ENCODE measurements at regions of chr20 and their contacts with region 1.

Region 1: DNA sequence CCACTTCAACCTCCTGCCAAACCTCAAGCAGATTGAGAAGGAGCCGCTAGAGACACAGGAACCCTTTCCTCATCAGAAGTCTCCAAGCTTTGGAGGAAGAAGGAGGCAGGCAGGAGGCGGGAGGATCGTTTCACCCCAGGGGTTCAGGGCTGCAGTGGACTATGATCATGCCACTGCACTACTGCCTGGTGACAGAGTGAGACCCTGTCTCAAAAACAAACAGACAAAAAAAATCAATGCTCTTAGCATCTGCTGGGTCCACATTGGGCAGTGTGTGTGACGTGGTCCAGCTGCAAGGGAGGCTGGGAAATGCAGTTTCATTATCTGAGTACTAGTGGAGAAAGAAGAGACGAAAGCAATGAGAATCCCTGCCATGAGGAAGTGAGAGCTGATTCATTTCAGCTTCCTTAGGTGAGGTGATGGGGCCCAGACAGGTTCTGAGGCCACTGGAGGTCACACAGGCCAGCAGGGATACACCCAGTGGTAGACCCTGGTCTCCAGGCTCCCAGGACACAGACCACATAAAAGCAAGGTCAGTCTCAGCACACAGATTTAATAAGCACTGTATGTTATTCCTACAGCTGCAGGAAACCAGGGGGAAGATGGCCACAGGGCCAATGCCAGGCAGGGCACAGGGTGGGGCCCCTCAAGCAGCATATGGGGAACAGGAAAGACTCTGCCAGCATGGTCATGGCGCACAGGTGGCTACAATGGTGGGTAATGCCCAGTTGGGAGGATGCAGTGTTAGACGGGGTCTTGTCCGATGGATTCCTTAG is 4.3 kb downstream of the GFRA4 start:
- DNase-seq: no peak
- ATAC-seq: no peak
- H3K4me3 ChIP-seq: no peak overlapping the region
- H3K27ac ChIP-seq: no peak overlapping the region
- H3K4me1 ChIP-seq: no peaks in the 10 kb centered on the region
- CTCF ChIP-seq: no peak
- EP300 ChIP-seq: no peak
- POLR2A ChIP-seq: no peak
- RAD21 ChIP-seq: no peak

Region 2: DNA sequence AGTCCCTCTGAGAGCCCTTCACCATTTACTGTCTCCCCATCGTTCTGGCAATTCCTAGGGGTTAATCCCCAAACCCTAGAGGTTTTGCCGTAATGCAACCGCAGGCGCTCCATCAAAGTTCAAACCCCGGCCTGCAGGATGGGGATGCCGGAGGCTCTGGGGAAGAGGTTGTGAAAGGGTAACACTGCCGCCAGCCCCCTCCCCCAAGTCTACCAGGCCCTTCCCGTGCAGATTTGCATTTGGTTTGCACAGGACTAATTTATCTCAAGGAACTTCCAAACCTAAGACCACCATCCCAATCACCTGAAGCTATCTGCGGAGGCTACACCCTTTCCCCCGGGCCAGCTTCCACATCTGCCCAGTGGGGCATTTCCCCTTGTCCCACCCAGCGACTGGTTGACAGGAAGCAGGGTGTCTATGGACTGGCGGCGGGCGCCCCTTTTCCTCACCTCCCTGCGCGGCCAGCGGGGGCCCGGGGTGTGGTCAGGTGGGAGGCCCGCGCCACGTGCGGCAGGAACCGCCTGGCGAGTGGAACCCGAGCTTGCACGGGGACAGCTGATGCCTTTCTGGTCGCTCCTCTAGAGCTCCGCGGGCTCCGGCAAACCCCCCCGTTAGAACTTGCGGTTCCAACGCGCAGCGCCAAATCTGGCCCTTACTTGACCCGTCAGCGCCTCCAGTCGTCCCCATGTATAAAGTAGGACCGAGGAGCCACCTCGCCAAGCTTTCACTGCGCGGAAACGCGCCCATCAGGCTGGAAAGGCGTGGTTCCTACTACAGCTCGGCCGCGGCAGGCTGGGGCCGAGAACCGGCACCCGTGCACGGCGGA is 410.5 kb before region 1 on chr20:
- CTCF ChIA-PET with region 1: no interaction called
- POLR2A ChIA-PET with region 1: no interaction called
- DNase-seq: no peak
- ATAC-seq: no peak
- H3K4me3 ChIP-seq: no peak overlapping the region
- H3K27ac ChIP-seq: no peak overlapping the region
- H3K4me1 ChIP-seq: peaks cover 8% of the 10 kb centered on the region; the same call in 1 of the 3 replicates
- CTCF ChIP-seq: no peak
- EP300 ChIP-seq: no peak
- POLR2A ChIP-seq: no peak
- RAD21 ChIP-seq: no peak

Region 3: GRCh38 chr20:3509064-3509463 is 149.8 kb before region 1 on chr20:
- CTCF ChIA-PET with region 1: no interaction called
- POLR2A ChIA-PET with region 1: no interaction called
- DNase-seq: no peak
- ATAC-seq: no peak
- H3K4me3 ChIP-seq: no peak overlapping the region
- H3K27ac ChIP-seq: no peak overlapping the region
- H3K4me1 ChIP-seq: no peaks in the 10 kb centered on the region; the same call in 2 of the 3 replicates
- CTCF ChIP-seq: no peak
- EP300 ChIP-seq: no peak
- POLR2A ChIP-seq: no peak
- RAD21 ChIP-seq: no peak

Region 4: GRCh38 chr20:3670511-3670910 is 11.6 kb after region 1 on chr20:
- CTCF ChIA-PET with region 1: interaction called, 14 read pairs
- POLR2A ChIA-PET with region 1: no interaction called
- DNase-seq: no peak
- ATAC-seq: peak; percentile 4 to 27; a peak in 4 of 6 replicates
- H3K4me3 ChIP-seq: no peak overlapping the region
- H3K27ac ChIP-seq: no peak overlapping the region
- H3K4me1 ChIP-seq: peaks cover 21% of the 10 kb centered on the region
- CTCF ChIP-seq: no peak
- EP300 ChIP-seq: no peak
- POLR2A ChIP-seq: no peak
- RAD21 ChIP-seq: 0 out of 5 replicates have a peak, but pooled peaks of 1 of the 2 experiments have one; percentile 8

Region 5: DNA sequence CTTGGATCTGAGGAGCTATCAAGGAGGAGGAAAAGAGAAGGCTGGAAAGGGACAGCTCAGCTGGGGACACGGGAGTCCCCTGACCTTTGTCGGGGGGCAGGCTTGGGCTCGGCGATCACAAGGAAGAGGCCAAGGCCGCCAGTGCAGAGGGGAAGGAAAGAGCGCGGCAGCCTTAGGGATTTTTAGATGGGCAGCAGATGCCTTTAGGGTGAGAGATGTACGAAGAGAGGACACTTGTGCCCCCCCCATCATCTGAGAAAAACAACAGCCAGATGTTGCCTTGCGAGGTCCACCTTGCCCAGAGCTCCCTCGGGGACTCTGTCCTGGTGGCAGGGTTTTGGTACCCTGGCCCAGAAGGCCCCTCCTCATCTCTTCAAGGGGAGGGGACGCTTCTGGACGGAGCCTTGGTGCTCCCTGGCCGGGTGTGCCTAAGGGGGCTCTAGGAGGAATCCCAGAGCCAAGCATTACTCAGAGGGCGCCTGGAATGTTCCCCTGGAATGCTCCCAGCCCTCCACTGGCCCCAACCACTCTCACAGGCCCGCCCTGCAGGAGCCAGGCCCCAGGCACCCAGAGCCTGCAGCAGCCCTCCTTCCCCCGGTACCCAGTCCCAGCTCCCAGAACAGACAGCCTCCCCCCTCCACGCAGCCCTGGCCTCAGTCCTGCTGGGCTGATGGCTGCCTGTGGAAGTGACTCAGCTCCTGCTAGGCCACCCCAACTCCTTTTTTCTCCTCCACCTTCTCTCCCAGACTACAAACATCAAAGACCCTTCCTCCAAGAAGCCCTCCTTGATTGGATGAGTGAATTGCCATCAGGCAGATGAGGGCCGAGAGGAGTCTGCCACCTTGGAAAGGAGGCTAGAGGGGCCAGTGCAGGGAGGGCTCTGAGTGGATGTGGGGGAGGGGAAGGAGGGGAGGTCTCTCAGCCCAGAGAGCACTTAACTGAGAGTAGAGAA is 21.1 kb after region 1 on chr20:
- CTCF ChIA-PET with region 1: interaction called, 14 read pairs
- POLR2A ChIA-PET with region 1: no interaction called
- DNase-seq: no peak
- ATAC-seq: no peak
- H3K4me3 ChIP-seq: no peak overlapping the region
- H3K27ac ChIP-seq: peak overlapping the region in 1 of 2 experiments; percentile 31; a peak in 2 of 6 replicates
- H3K4me1 ChIP-seq: peaks cover 25% of the 10 kb centered on the region; the same call in 2 of the 3 replicates
- CTCF ChIP-seq: no peak
- EP300 ChIP-seq: no peak
- POLR2A ChIP-seq: no peak
- RAD21 ChIP-seq: no peak

Region 6: GRCh38 chr20:3811467-3812258 is 152.8 kb after region 1 on chr20:
- CTCF ChIA-PET with region 1: no interaction called
- POLR2A ChIA-PET with region 1: no interaction called
- DNase-seq: peak; percentile 97 to 100
- ATAC-seq: peak; percentile 54 to 63
- H3K4me3 ChIP-seq: peak overlapping the region; percentile 37
- H3K27ac ChIP-seq: peak overlapping the region; percentile 95 to 99
- H3K4me1 ChIP-seq: peaks cover 65% of the 10 kb centered on the region
- CTCF ChIP-seq: no peak
- EP300 ChIP-seq: peak; percentile 93 to 98
- POLR2A ChIP-seq: peak; percentile 19
- RAD21 ChIP-seq: peak; percentile 23 to 58

Measured in A549 (cell line).